GM18951 (cell line): ENCODE measurements at regions of chr6 and their contacts with region 1.

Region 1: GRCh38 chr6:13328076-13328874 is at the start of gene TBC1D7:
- POLR2A ChIP-seq: peak; percentile 90

Region 2: GRCh38 chr6:12911387-12911960 is 416.8 kb before region 1 on chr6:
- in situ Hi-C with region 1: loop called (anchors 25 kb)
- POLR2A ChIP-seq: no peak

Region 3: GRCh38 chr6:13445005-13445743 is 116.9 kb after region 1 on chr6:
- in situ Hi-C with region 1: no loop called
- POLR2A ChIP-seq: no peak